H1 (cell line): ENCODE measurements at regions of chr19 and their contacts with region 1.

Region 1: DNA sequence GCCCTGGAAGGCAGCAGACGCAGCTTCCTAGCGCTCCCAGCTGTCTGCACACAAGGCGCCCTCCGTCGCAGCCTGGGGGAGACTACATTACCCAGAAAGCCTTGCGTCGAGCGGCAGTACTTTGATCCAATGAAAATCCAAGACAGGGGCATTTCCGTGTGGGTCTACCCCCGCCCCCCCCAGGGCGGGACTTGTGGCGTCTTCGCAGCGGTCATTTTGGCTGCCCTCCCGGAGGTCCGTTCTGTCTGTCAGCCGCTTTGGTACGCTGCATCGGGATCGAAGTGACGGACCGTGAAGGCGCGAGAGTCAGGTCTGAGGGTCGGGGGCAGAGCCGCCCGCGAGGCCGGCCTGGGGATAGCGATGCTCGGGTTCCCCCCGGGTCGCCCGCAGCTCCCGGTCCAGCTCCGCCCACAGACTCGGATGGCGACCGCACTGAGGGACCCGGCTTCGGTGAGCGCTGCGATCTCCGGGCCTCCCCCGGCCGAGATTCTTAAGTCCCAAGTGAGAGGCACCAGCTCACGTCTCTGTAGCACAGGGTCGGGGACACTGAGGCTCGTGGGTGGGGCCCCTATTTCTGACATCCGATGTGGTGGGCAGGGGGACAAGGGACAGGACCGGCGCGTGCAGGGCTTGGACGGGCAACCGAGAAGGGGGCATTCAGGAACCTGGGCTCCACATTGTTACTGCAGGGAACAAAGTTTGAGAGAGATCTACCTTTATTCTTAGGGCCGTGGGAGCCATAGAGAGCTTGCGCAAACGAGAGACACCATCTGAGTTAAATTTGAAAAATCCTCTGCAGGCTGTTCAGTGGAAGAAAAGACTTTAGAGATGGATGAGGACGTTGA is at the start of gene ZNF211:
- DNase-seq: peak; percentile 84 to 93
- H3K4me3 ChIP-seq: peak within 1 kb of the TSS; percentile 85 to 93 (median 90)
- H3K27ac ChIP-seq: no peak within 1 kb of the TSS
- H3K4me1 ChIP-seq: peaks cover 0 to 3% (median 1%) of the 10 kb centered on the region in 4 experiments; a peak in 3 of 7 replicates
- H3K27me3 ChIP-seq: no peaks in the 10 kb centered on the region
- CTCF ChIP-seq: no peak
- EP300 ChIP-seq: no peak
- POLR2A ChIP-seq: peak in 1 of 2 experiments; percentile 39; a peak in 1 of 3 replicates
- RAD21 ChIP-seq: no peak; a peak in 1 of 4 replicates
- total RNA-seq, gene ZNF211: 15.0 and 15.7 TPM in 2 replicates

Region 2: DNA sequence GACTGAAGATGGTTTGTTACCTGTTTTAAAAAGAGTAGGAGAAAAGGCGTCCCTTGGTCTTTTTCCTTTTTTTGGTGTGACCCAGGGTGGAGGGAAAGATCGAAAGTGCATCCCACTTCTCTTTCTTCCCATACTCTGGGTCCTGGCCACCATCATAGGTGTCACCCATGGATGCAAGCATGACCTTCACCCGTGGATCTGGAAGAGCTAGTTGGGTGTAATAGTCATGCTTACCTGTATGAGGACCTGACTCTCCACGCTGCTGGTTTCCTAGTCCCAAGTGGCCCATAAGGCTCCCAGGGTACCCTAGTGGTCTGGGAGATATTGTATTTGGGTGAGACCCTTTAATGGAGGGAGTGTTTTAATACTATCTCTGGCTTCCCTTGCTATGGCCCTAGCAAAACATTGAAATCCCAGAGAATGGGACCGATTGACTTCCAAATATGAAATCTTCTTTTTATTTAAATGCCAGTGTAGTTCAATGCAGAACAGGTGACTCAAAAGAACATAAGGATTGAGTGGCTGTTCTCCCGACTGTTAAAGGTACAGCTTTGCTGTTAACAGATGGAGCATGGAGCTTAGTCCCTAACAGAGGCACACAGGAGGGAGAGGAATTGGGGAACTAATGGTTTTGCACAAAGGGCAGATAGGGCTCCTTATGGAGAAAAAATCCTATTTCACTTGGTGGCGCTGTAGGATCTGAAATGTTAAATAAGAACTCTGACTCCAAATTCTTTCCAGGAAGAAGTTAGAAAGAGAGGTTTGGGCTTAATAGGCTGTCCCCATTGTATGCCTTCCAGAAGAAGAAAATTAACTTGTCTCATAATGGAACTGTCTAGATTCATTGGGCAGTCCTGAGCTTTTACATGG is 66.6 kb before region 1 on chr19:
- CTCF ChIA-PET with region 1: no interaction called
- POLR2A ChIA-PET with region 1: no interaction called
- DNase-seq: no peak
- H3K4me3 ChIP-seq: no peak overlapping the region
- H3K27ac ChIP-seq: no peak overlapping the region
- H3K4me1 ChIP-seq: no peaks in the 10 kb centered on the region
- H3K27me3 ChIP-seq: no peaks in the 10 kb centered on the region
- CTCF ChIP-seq: no peak
- EP300 ChIP-seq: no peak
- POLR2A ChIP-seq: no peak
- RAD21 ChIP-seq: peak; percentile 36 to 37; a peak in 2 of 4 replicates

Region 3: GRCh38 chr19:57613941-57614743 is 19.1 kb before region 1 on chr19 and contains the start of gene ZNF134:
- CTCF ChIA-PET with region 1: interaction called, 3 read pairs
- POLR2A ChIA-PET with region 1: interaction called, 17 read pairs
- DNase-seq: peak; percentile 66 to 90
- H3K4me3 ChIP-seq: peak within 1 kb of the TSS; percentile 94 to 98 (median 96)
- H3K27ac ChIP-seq: peak within 1 kb of the TSS; percentile 89
- H3K4me1 ChIP-seq: peaks cover 0 to 3% (median 0%) of the 10 kb centered on the region in 4 experiments; a peak in 3 of 7 replicates
- H3K27me3 ChIP-seq: peaks cover 0 to 1% (median 0%) of the 10 kb centered on the region in 4 experiments; a peak in 1 of 7 replicates
- CTCF ChIP-seq: no peak
- EP300 ChIP-seq: no peak
- POLR2A ChIP-seq: peak; percentile 67 to 88
- RAD21 ChIP-seq: 0 out of 4 replicates have a peak, but pooled peaks of 1 of the 2 experiments have one; percentile 2
- total RNA-seq, gene ZNF134: 54.6 and 55.1 TPM in 2 replicates

Region 4: GRCh38 chr19:57620673-57621199 is 12.5 kb before region 1 on chr19:
- CTCF ChIA-PET with region 1: interaction called, 3 read pairs
- POLR2A ChIA-PET with region 1: interaction called, 17 read pairs
- DNase-seq: no peak
- H3K4me3 ChIP-seq: peak overlapping the region in 2 of 4 experiments; percentile 4 to 35; a peak in 3 of 8 replicates
- H3K27ac ChIP-seq: no peak overlapping the region
- H3K4me1 ChIP-seq: no peaks in the 10 kb centered on the region
- H3K27me3 ChIP-seq: no peaks in the 10 kb centered on the region
- CTCF ChIP-seq: no peak
- EP300 ChIP-seq: no peak
- POLR2A ChIP-seq: no peak
- RAD21 ChIP-seq: no peak

Region 5: GRCh38 chr19:57671114-57671878 is 38.1 kb after region 1 on chr19:
- CTCF ChIA-PET with region 1: no interaction called
- POLR2A ChIA-PET with region 1: no interaction called
- DNase-seq: no peak
- H3K4me3 ChIP-seq: no peak overlapping the region
- H3K27ac ChIP-seq: no peak overlapping the region
- H3K4me1 ChIP-seq: peaks cover 0 to 3% (median 0%) of the 10 kb centered on the region in 4 experiments; a peak in 1 of 7 replicates
- H3K27me3 ChIP-seq: peaks cover 0 to 4% (median 0%) of the 10 kb centered on the region in 4 experiments; a peak in 2 of 7 replicates
- CTCF ChIP-seq: no peak
- EP300 ChIP-seq: no peak
- POLR2A ChIP-seq: no peak
- RAD21 ChIP-seq: no peak